Endothelial cell of umbilical vein (primary cell): ENCODE measurements at regions of chr15 and their contacts with region 1.

Region 1: DNA sequence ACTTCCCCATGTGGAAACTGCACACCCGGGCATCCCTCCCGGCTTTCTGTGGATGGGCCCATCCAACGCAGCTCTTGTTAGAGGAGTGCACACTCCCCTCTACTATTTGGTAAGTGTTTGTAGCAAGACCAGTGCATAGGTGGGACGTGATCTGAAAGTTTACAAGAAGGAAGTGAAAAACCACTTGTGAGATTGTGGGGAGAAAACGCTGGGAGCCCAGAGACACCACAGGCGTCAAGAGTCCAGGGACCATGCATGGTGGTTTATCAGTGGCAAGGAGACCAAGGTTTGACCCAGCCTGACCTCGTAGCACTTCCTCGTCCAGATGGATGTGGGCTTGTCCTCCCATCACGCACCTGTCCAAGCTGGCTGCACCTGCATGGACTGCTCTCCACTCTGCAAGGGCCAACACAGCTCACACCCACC is 51.6 kb downstream of the ATP10A start:
- DNase-seq: no peak
- H3K4me3 ChIP-seq: no peak overlapping the region
- H3K27ac ChIP-seq: no peak overlapping the region
- H3K4me1 ChIP-seq: no peaks in the 10 kb centered on the region
- H3K27me3 ChIP-seq: no peaks in the 10 kb centered on the region
- CTCF ChIP-seq: no peak
- POLR2A ChIP-seq: no peak

Region 2: GRCh38 chr15:25783607-25784540 is 27.6 kb before region 1 on chr15:
- CTCF ChIA-PET with region 1: no interaction called
- POLR2A ChIA-PET with region 1: no interaction called
- dilution Hi-C with region 1: no loop called
- intact Hi-C with region 1: no loop called
- DNase-seq: no peak
- H3K4me3 ChIP-seq: no peak overlapping the region
- H3K27ac ChIP-seq: no peak overlapping the region
- H3K4me1 ChIP-seq: no peaks in the 10 kb centered on the region
- H3K27me3 ChIP-seq: no peaks in the 10 kb centered on the region
- CTCF ChIP-seq: no peak
- POLR2A ChIP-seq: no peak

Region 3: GRCh38 chr15:25863111-25863967 is 51.8 kb after region 1 on chr15 and contains the start of gene ATP10A:
- CTCF ChIA-PET with region 1: no interaction called
- POLR2A ChIA-PET with region 1: no interaction called
- dilution Hi-C with region 1: no loop called
- intact Hi-C with region 1: loop called (anchors 10 kb)
- DNase-seq: no peak
- H3K4me3 ChIP-seq: no peak within 1 kb of the TSS
- H3K27ac ChIP-seq: no peak within 1 kb of the TSS
- H3K4me1 ChIP-seq: no peaks in the 10 kb centered on the region
- H3K27me3 ChIP-seq: no peaks in the 10 kb centered on the region
- CTCF ChIP-seq: no peak
- POLR2A ChIP-seq: no peak
- total RNA-seq, gene ATP10A: not detected in 2 replicates